Cardiac septum (tissue), 1 donor: ENCODE measurements at regions of chr15 and their contacts with region 1.

Region 1: GRCh38 chr15:70875001-70875782 is 17.0 kb downstream of the THAP10 start:
- DNase-seq: no peak

Region 2: DNA sequence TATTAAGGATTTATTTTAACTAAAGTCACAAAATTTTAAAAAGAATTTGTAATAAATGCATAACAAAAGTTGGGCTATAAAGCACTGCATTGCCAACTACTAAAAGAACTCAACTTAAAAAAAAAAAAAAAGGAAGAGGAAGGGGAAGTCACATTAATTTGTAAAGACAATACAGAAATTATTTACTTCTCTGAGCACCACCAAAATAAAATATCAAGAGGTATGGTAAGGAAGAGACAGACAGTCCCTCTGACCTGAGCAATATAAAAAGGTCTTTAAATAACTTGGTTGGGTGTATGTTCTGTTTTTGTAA is 195.3 kb before region 1 on chr15:
- intact Hi-C with region 1: loop called (anchors 2 kb)
- DNase-seq: no peak

Region 3: DNA sequence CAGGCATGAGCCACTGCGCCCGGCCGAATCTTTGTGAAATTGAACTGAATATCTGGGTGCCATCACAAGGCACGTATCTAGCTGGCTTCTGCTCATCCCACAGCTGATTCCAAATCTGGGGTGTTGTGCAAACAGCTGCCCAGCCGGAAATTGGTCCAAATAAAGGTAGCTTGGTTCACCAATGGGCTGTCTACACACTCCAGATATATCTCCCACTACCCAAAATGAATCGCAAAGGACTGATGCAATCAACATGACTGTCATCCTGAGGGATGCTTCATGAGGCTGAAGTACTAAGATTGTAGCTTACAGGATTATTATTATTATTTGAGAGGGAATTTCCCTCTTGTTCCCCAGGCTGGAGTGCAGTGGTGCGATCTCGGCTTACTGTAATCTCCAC is 49.4 kb before region 1 on chr15:
- intact Hi-C with region 1: loop called (anchors 1 kb)
- DNase-seq: no peak